ENCODE measurements at regions of chr3 and their contacts with region 1.

Region 1: DNA sequence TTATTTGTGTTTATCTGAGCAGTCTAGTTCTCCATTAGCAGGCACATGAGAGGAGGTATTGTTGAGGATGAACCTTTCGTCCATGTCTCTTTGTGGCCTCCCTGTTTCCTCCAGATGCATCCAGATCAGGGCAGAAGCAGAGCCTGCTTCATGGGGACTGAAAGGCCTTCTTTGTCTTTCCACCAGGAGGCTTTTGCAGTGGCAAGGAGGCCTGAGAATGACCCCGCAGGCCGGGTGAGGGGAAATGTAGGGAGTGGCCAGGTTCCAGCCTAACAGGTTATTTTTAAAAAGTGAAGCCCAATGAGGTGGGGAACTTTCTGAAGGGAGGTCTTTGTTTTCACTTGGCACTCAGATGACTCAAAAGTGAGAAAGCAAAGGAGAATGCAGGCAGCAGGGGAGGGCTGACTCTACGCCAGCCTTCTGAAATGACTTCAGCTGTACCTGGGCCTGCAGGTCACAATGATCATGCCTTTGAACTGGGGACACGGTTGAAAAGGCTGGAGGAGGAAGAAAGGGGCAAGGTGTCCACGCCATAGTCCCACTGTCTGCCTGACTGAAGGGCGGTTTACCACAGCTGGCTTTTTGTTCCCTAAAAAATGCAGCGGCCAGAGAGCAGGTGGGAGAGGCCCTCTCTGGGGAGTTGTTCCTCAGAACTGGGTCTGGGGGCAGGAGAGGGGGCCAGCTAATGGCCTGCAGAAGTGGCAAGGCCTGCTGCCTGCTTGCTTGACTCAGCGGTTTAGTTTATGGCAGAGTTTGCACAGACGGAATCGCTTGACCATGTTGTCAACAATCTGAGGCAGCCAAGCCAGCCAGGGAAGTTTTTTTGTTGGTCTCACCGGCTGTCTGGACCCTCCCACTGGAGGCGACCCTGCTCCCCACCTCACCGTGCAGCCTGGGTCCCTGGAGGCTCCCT is 28.7 kb downstream of the CMTM7 start:
- DNase-seq: no peak
- ATAC-seq: peak; percentile 37
- H3K4me3 Mint-ChIP-seq: peak overlapping the region; percentile 59
- H3K27ac Mint-ChIP-seq: peak overlapping the region; percentile 88
- H3K4me1 Mint-ChIP-seq: peaks cover 78% of the 10 kb centered on the region
- H3K27me3 Mint-ChIP-seq: no peaks in the 10 kb centered on the region

Region 2: GRCh38 chr3:32154205-32154579 is 266.2 kb before region 1 on chr3:
- POLR2A ChIA-PET with region 1: no interaction called
- DNase-seq: no peak
- ATAC-seq: no peak
- H3K4me3 Mint-ChIP-seq: no peak overlapping the region
- H3K27ac Mint-ChIP-seq: no peak overlapping the region
- H3K4me1 Mint-ChIP-seq: peaks cover 2% of the 10 kb centered on the region
- H3K27me3 Mint-ChIP-seq: no peaks in the 10 kb centered on the region

Region 3: GRCh38 chr3:32262086-32262600 is 158.2 kb before region 1 on chr3:
- POLR2A ChIA-PET with region 1: no interaction called
- DNase-seq: no peak
- ATAC-seq: no peak
- H3K4me3 Mint-ChIP-seq: no peak overlapping the region
- H3K27ac Mint-ChIP-seq: no peak overlapping the region
- H3K4me1 Mint-ChIP-seq: peaks cover 9% of the 10 kb centered on the region
- H3K27me3 Mint-ChIP-seq: no peaks in the 10 kb centered on the region

Region 4: GRCh38 chr3:32302601-32303398 is 117.6 kb before region 1 on chr3:
- POLR2A ChIA-PET with region 1: no interaction called
- DNase-seq: no peak
- ATAC-seq: no peak
- H3K4me3 Mint-ChIP-seq: peak overlapping the region; percentile 65
- H3K27ac Mint-ChIP-seq: peak overlapping the region; percentile 88
- H3K4me1 Mint-ChIP-seq: peaks cover 16% of the 10 kb centered on the region
- H3K27me3 Mint-ChIP-seq: no peaks in the 10 kb centered on the region

Region 5: GRCh38 chr3:32340039-32340438 is 80.3 kb before region 1 on chr3:
- POLR2A ChIA-PET with region 1: no interaction called
- DNase-seq: no peak
- ATAC-seq: peak; percentile 48
- H3K4me3 Mint-ChIP-seq: no peak overlapping the region
- H3K27ac Mint-ChIP-seq: no peak overlapping the region
- H3K4me1 Mint-ChIP-seq: peaks cover 10% of the 10 kb centered on the region
- H3K27me3 Mint-ChIP-seq: no peaks in the 10 kb centered on the region

Region 6: GRCh38 chr3:32391643-32392535 is 28.5 kb before region 1 on chr3 and contains the start of gene CMTM7:
- POLR2A ChIA-PET with region 1: interaction called, 11 read pairs
- DNase-seq: peak; percentile 76
- ATAC-seq: peak; percentile 76
- H3K4me3 Mint-ChIP-seq: peak within 1 kb of the TSS; percentile 99
- H3K27ac Mint-ChIP-seq: peak within 1 kb of the TSS; percentile 97
- H3K4me1 Mint-ChIP-seq: peaks cover 43% of the 10 kb centered on the region
- H3K27me3 Mint-ChIP-seq: no peaks in the 10 kb centered on the region
- total RNA-seq, gene CMTM7: 45.3 to 49.0 TPM

Region 7: GRCh38 chr3:32401556-32402081 is 18.8 kb before region 1 on chr3:
- POLR2A ChIA-PET with region 1: interaction called, 18 read pairs
- DNase-seq: peak; percentile 74
- ATAC-seq: peak; percentile 83
- H3K4me3 Mint-ChIP-seq: peak overlapping the region; percentile 93
- H3K27ac Mint-ChIP-seq: peak overlapping the region; percentile 99
- H3K4me1 Mint-ChIP-seq: peaks cover 48% of the 10 kb centered on the region
- H3K27me3 Mint-ChIP-seq: no peaks in the 10 kb centered on the region

Region 8: GRCh38 chr3:32460031-32460749 is 39.8 kb after region 1 on chr3:
- POLR2A ChIA-PET with region 1: interaction called, 85 read pairs
- DNase-seq: peak; percentile 77
- ATAC-seq: peak; percentile 81
- H3K4me3 Mint-ChIP-seq: peak overlapping the region; percentile 86
- H3K27ac Mint-ChIP-seq: no peak overlapping the region
- H3K4me1 Mint-ChIP-seq: peaks cover 39% of the 10 kb centered on the region
- H3K27me3 Mint-ChIP-seq: no peaks in the 10 kb centered on the region

Region 9: DNA sequence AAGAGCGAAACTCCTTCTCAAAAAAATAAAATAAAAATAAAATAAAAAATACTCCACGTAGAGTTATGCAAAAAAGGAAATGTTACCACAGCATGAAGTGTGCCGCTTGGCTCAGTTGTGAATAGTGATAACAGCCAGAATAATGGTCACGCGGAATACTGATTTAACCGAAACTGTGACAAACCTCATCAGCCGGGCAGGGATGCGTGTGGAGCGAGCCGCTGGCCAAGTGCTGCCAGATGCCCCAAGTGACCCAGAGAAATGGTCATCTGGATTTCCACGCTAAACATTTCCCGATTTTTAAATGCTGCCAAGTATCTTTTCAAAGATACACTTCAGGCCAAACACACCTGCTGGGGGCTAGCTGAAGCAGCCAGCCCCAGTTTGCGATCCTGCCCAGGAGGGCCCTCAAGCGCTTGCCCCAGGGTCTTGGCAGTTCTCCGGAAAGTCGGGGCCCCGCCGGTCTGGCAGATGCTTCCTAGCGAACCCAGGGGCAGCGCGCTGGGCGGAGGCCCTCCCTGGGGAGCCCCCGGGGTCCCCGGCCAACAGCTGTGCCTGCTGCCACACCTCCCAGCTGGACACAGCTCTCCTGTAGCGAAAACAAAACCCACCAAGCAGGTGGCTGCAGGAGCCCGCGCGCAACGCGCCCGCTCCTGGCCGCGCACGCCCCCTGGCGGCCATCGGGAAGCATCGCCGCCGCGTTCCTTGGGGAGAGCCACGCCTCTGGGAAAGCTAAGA is 47.1 kb after region 1 on chr3:
- POLR2A ChIA-PET with region 1: interaction called, 85 read pairs
- DNase-seq: peak; percentile 89
- ATAC-seq: peak; percentile 83
- H3K4me3 Mint-ChIP-seq: peak overlapping the region; percentile 39
- H3K27ac Mint-ChIP-seq: peak overlapping the region; percentile 40
- H3K4me1 Mint-ChIP-seq: peaks cover 29% of the 10 kb centered on the region
- H3K27me3 Mint-ChIP-seq: no peaks in the 10 kb centered on the region